ENCODE measurements at regions of chr19 and their contacts with region 1.

Region 1: DNA sequence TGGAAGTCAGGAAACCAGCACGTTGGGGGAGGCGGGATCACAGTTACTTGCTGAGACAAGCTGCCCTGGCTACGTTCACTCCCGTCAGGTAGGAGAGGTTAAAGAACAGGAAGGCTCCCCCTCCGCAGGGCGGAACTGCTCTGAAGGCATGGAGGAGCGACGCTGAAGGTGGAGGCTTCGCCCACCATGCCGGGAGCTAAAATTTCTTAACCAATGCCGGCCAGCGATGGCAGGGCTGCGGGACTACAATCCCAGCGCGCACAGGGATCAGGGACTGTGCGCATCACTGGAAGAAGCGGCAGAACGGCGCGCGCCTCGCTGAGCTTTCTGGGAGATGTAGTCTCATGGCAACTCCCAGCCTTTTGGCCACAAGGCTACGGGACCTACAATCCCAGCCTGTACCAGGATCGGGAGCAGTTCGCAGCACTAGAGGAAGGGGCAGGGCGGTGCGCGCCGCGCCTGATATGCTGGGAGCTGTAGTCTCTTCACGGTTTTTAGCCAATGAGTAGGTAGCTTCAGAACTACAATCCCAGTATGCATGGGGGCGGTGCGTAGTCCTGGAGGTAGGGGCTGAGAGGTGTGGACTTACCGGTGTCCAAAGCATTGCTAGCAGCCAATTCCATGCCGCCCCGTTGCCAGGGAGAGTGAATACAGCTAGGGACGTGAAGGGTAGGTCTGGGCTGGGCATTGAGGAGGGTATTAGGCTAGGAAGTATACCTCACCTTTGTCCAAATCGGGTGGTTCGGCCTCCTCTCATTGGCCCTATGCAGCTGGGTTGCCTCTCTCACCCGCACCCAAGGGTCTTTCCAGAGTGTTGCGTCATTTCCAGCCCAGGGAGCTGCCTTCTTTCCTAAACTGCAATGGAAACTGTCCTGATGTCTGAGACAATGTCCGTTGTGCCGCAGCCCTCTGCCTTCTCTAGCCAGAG is 12.8 kb upstream of the ZNF682 start:
- DNase-seq: peak; percentile 99
- ATAC-seq: peak; percentile 97
- H3K4me3 Mint-ChIP-seq: peak overlapping the region; percentile 95
- H3K27ac Mint-ChIP-seq: peak overlapping the region; percentile 98
- H3K4me1 Mint-ChIP-seq: peaks cover 12% of the 10 kb centered on the region
- H3K27me3 Mint-ChIP-seq: no peaks in the 10 kb centered on the region
- CTCF ChIP-seq: no peak

Region 2: DNA sequence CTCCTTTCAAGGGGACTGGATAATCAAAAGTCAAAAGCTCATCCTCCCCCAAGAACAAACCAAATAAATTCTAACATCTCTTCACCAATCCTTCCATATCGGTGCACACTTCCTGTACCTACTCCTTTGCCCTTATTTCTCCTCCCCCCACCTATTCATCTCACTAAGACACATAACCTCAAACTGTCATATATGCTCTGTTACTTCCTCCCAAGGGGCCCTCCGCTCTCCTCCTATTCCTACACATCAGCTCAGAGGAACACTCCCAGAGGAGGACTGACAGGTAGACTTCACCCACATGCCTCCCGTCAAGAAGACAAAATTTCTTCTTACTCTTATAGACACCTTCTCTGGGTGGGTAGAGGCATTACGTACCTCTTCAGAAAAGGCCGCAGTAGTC is 103.3 kb before region 1 on chr19:
- CTCF ChIA-PET with region 1: no interaction called
- POLR2A ChIA-PET with region 1: no interaction called
- DNase-seq: no peak
- ATAC-seq: no peak
- H3K4me3 Mint-ChIP-seq: no peak overlapping the region
- H3K27ac Mint-ChIP-seq: no peak overlapping the region
- H3K4me1 Mint-ChIP-seq: no peaks in the 10 kb centered on the region
- H3K27me3 Mint-ChIP-seq: peaks cover 7% of the 10 kb centered on the region
- CTCF ChIP-seq: no peak

Region 3: DNA sequence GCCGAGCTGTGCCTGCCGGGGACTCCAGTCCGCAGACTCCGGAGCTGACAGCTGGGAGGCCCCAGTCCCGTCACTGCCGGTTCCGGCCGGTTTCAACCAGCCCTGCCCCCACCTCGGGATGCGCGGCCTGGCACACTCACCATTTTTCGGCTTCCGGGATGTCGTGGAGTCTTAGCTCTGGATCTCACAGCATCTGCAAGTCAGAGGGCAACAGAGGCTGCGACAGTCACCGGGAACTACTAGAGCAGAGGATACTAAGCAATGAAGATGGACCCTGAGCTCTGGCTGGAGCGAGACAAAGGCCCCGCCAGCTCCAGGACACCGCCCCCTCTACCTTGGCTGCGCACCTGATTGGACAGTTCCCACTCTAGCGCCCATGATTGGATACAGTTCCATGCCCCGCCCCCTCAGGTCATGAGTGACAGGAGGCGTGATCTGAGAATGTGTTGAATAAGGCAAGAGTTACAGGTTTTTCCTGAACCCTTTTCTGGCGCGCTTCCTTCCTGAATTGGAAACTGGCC is 12.8 kb before region 1 on chr19 and contains the start of gene ZNF682:
- CTCF ChIA-PET with region 1: interaction called, 9 read pairs
- POLR2A ChIA-PET with region 1: interaction called, 39 read pairs
- DNase-seq: peak; percentile 99
- ATAC-seq: peak; percentile 100
- H3K4me3 Mint-ChIP-seq: peak within 1 kb of the TSS; percentile 91
- H3K27ac Mint-ChIP-seq: peak within 1 kb of the TSS; percentile 98
- H3K4me1 Mint-ChIP-seq: peaks cover 17% of the 10 kb centered on the region
- H3K27me3 Mint-ChIP-seq: no peaks in the 10 kb centered on the region
- CTCF ChIP-seq: no peak
- total RNA-seq, gene ZNF682: 20.5 to 25.4 TPM (median 20.8 TPM) in 3 replicates

Region 4: DNA sequence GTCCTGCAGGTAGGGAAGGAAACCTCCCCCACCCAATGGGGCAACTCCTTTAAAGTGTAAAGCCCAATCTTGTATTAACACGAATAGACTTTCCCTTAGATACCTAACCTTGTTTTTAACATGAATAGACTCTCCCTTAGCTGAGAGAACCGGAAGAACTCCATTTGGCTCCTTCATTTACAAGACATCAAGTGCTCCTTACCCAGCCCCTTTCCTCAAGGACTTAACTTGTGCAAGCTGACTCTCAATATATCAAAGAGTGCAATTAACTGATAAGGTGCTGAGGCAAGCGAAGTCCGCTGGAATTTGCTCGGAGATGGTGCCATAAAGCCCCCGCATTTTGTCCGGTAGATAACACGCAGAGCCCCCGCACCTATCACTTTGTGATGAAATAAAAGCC is 15.8 kb after region 1 on chr19:
- CTCF ChIA-PET with region 1: interaction called, 7 read pairs
- POLR2A ChIA-PET with region 1: interaction called, 19 read pairs
- DNase-seq: no peak
- ATAC-seq: peak; percentile 83
- H3K4me3 Mint-ChIP-seq: peak overlapping the region; percentile 62
- H3K27ac Mint-ChIP-seq: peak overlapping the region; percentile 83
- H3K4me1 Mint-ChIP-seq: peaks cover 48% of the 10 kb centered on the region
- H3K27me3 Mint-ChIP-seq: peaks cover 2% of the 10 kb centered on the region; the same call in 1 of the 2 replicates
- CTCF ChIP-seq: no peak

Region 5: GRCh38 chr19:20077791-20078463 is 25.8 kb after region 1 on chr19 and contains the start of gene ZNF90:
- CTCF ChIA-PET with region 1: no interaction called
- POLR2A ChIA-PET with region 1: interaction called, 35 read pairs
- DNase-seq: peak; percentile 95
- ATAC-seq: peak; percentile 92
- H3K4me3 Mint-ChIP-seq: peak within 1 kb of the TSS; percentile 98
- H3K27ac Mint-ChIP-seq: peak within 1 kb of the TSS; percentile 97
- H3K4me1 Mint-ChIP-seq: peaks cover 42% of the 10 kb centered on the region
- H3K27me3 Mint-ChIP-seq: no peaks in the 10 kb centered on the region
- CTCF ChIP-seq: no peak
- total RNA-seq, gene ZNF90: 112 to 114 TPM (median 114 TPM) in 3 replicates

Region 6: DNA sequence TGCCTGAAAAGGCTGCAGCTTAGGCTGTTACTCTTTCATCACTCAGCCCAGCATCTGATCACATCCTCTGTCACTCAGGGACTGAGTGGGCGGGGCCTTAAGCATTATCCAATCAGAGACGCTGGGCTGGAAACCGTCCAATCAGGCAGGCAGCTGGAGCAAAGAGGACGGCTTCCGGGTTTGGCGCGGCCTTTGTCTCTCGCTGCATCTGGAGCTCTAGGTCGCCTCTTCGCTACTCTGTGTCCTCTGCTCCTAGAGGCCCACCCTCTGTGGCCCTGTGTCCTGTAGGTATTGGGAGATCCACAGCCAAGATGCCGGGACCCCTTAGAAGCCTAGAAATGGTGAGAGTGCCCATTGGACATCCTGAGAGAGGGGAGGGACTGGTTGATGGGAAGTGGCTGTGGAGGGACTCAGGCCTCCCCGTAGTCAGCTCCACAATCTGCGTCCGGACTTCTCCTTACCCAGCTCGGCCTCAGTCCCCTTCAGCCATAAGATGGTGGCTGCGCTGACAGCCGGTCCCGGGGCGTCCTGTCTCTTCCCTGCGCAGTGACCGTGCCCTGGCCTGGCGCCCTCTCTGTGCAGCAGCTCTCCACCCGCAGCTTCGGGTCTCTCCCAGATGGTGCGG is 115.0 kb after region 1 on chr19 and contains the start of gene ZNF486:
- CTCF ChIA-PET with region 1: interaction called, 3 read pairs
- POLR2A ChIA-PET with region 1: interaction called, 19 read pairs
- DNase-seq: peak; percentile 98
- ATAC-seq: peak; percentile 97
- H3K4me3 Mint-ChIP-seq: peak within 1 kb of the TSS; percentile 98
- H3K27ac Mint-ChIP-seq: peak within 1 kb of the TSS; percentile 98
- H3K4me1 Mint-ChIP-seq: peaks cover 51% of the 10 kb centered on the region
- H3K27me3 Mint-ChIP-seq: no peaks in the 10 kb centered on the region
- CTCF ChIP-seq: no peak
- total RNA-seq, gene ZNF486: 20.7 to 22.3 TPM (median 20.8 TPM) in 3 replicates

Measured in WTC11 (cell line).